MCF 10A (cell line): ENCODE measurements at regions of chr4 and their contacts with region 1.

Region 1: GRCh38 chr4:82201805-82202641 is 171.8 kb downstream of the HNRNPD start:
- DNase-seq: peak; percentile 69
- H3K4me3 Mint-ChIP-seq: no peak overlapping the region
- H3K27ac Mint-ChIP-seq: no peak overlapping the region
- H3K4me1 Mint-ChIP-seq: peaks cover 5% of the 10 kb centered on the region
- H3K27me3 Mint-ChIP-seq: no peaks in the 10 kb centered on the region
- CTCF ChIP-seq: peak; percentile 74

Region 2: DNA sequence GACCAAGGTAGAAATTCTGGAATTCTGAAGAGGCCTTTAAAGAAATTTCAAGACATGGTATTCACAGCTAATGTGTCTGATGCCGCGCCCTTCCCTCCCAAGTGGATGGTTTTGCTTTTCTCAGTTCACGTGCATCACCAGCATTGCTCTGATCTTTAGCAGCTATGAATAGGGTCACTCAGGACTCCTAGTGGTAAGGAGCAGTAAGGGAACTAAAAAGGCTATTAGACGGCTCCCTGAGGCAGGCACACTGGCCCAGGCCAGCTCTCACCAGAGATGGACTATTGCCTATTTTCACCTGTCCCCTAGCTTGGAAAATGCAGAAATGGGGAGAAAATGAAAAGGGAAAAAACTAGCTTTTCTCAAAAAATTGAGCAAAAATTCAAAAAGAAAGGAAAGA is 282.8 kb before region 1 on chr4:
- CTCF ChIA-PET with region 1: no interaction called
- POLR2A ChIA-PET with region 1: no interaction called
- intact Hi-C with region 1: loop called (anchors 5 kb)
- DNase-seq: peak; percentile 38
- H3K4me3 Mint-ChIP-seq: no peak overlapping the region
- H3K27ac Mint-ChIP-seq: no peak overlapping the region
- H3K4me1 Mint-ChIP-seq: no peaks in the 10 kb centered on the region
- H3K27me3 Mint-ChIP-seq: no peaks in the 10 kb centered on the region
- CTCF ChIP-seq: peak; percentile 26

Region 3: GRCh38 chr4:82231771-82232170 is 29.7 kb after region 1 on chr4:
- CTCF ChIA-PET with region 1: no interaction called
- POLR2A ChIA-PET with region 1: no interaction called
- intact Hi-C with region 1: no loop called
- DNase-seq: no peak
- H3K4me3 Mint-ChIP-seq: no peak overlapping the region
- H3K27ac Mint-ChIP-seq: no peak overlapping the region
- H3K4me1 Mint-ChIP-seq: peaks cover 14% of the 10 kb centered on the region
- H3K27me3 Mint-ChIP-seq: no peaks in the 10 kb centered on the region
- CTCF ChIP-seq: no peak